ENCODE measurements at regions of chr6 and their contacts with region 1.

Region 1: GRCh38 chr6:111259089-111259831 is 172.0 kb downstream of the SLC16A10 start:
- DNase-seq: peak; percentile 95
- H3K4me3 ChIP-seq: peak overlapping the region; percentile 74 to 98
- H3K27ac ChIP-seq: peak overlapping the region; percentile 83 to 85
- H3K4me1 ChIP-seq: peaks cover 2 to 10% of the 10 kb centered on the region in 2 experiments
- H3K27me3 ChIP-seq: no peaks in the 10 kb centered on the region
- CTCF ChIP-seq: peak; percentile 91
- EP300 ChIP-seq: no peak; a peak in 1 of 4 replicates
- RAD21 ChIP-seq: peak; percentile 89

Region 2: DNA sequence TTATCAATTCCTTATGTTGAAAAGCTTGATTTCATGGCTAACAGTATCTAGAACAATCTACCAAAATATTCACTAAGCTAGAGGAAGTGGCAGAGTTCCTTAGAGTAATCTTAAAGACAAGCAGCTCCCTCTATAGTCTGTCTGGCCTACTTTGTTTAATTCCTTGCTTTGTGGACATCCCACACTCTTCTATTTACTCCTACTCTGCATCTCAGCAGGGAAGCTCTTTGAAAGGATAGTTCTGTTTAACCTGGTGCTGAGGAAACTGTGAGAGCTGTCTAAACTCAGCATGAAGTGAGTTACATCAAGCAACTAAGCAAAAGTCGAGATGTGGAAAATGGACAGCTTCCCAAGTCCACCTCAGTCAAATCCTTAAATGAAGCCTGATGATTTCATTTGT is 219.5 kb after region 1 on chr6:
- CTCF ChIA-PET with region 1: interaction called, 11 read pairs
- POLR2A ChIA-PET with region 1: interaction called, 6 read pairs
- DNase-seq: no peak
- H3K4me3 ChIP-seq: no peak overlapping the region
- H3K27ac ChIP-seq: peak overlapping the region; percentile 43 to 51
- H3K4me1 ChIP-seq: peaks cover 19 to 29% of the 10 kb centered on the region in 2 experiments; a peak in 3 of 4 replicates
- H3K27me3 ChIP-seq: no peaks in the 10 kb centered on the region
- CTCF ChIP-seq: peak; percentile 59
- EP300 ChIP-seq: no peak
- RAD21 ChIP-seq: peak; percentile 55

Region 3: GRCh38 chr6:111646942-111647341 is 387.7 kb after region 1 on chr6:
- CTCF ChIA-PET with region 1: interaction called, 12 read pairs
- POLR2A ChIA-PET with region 1: no interaction called
- DNase-seq: no peak
- H3K4me3 ChIP-seq: no peak overlapping the region
- H3K27ac ChIP-seq: no peak overlapping the region
- H3K4me1 ChIP-seq: peaks cover 0 to 5% of the 10 kb centered on the region in 2 experiments; a peak in 1 of 4 replicates
- H3K27me3 ChIP-seq: no peaks in the 10 kb centered on the region
- CTCF ChIP-seq: no peak
- EP300 ChIP-seq: no peak
- RAD21 ChIP-seq: no peak

Measured in SK-N-SH (cell line).